Left cardiac atrium (tissue), 4 donors: ENCODE measurements at regions of chr19 and their contacts with region 1.

Region 1: DNA sequence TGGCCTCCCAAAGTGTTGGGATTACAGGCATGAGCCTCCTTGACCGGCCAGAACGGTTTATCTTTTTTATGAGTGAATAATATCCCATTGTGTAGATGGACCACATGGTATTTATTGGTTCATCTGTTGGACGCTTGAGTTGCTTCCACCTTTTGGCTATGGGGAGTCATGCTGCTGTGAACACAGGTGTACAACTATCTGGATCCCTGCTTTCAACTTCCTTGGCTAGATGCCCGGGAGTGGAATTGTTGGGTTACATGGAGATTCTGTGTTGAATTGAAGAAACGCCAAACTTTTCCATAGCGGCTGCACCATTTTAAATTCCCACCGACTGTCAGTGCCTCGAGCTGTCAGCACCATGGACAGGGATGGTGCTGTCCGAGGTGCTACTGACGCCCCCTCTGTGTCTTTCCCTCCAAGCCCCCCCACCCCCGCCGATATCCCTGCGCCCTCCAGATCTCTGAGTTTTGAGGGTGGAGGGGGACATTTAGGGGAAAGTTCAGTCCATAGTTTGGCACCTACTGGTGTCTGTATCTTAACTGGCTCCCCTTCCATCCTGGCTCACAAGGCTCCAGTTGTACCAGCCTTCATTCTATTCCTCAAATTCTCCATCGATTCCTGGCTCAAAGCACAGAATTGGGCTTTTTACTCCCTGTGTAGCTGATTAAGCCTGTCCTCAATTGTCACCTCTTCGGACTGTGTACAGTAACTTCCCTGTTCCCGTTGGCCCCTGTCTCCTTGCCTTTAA is 27.3 kb downstream of the PNPLA6 start:
- DNase-seq: no peak
- ATAC-seq: no peak

Region 2: GRCh38 chr19:7680606-7681339 is 118.0 kb after region 1 on chr19 and contains the start of gene TRAPPC5:
- intact Hi-C with region 1: loop called in 1 of 2 experiments (anchors 5 kb)
- DNase-seq: peak; percentile 90
- ATAC-seq: peak; percentile 87 to 91
- total RNA-seq, gene TRAPPC5: 82.6 to 108 TPM